Mammary epithelial cell (primary cell): ENCODE measurements at regions of chr1 and their contacts with region 1.

Region 1: GRCh38 chr1:229341774-229342655 is 832 bp downstream of the CCSAP start:
- DNase-seq: peak; percentile 78
- H3K4me3 ChIP-seq: peak overlapping the region; percentile 66 to 83 (median 69)
- H3K27ac ChIP-seq: peak overlapping the region; percentile 48
- H3K4me1 ChIP-seq: peaks cover 13% of the 10 kb centered on the region
- H3K27me3 ChIP-seq: no peaks in the 10 kb centered on the region
- CTCF ChIP-seq: no peak

Region 2: DNA sequence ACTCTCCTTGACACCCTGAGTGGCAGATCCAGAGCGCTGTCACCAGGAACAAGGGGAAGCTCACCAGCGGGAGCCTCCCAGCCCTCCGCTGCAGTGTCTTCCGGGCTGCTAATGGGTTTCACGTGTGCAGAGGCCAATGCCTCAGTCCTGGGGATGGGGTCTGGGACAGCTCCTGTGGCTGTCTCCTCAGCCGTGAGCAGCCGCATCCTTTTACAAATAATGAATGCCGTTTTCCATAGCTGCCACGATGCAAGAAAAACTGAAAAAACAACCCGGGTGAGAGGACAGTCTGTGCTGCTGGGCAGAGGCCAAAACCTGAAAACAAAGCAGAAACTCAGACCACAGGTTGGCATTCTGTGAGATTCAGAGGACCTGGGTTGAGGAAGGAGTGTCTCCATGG is 283.3 kb before region 1 on chr1:
- CTCF ChIA-PET with region 1: no interaction called
- dilution Hi-C with region 1: no loop called
- in situ Hi-C with region 1: no loop called
- intact Hi-C with region 1: no loop called
- DNase-seq: no peak
- H3K4me3 ChIP-seq: no peak overlapping the region
- H3K27ac ChIP-seq: no peak overlapping the region
- H3K4me1 ChIP-seq: peaks cover 3% of the 10 kb centered on the region
- H3K27me3 ChIP-seq: peaks cover 4% of the 10 kb centered on the region
- CTCF ChIP-seq: no peak

Region 3: GRCh38 chr1:229270547-229271447 is 71.2 kb before region 1 on chr1 and contains the start of gene RAB4A:
- CTCF ChIA-PET with region 1: no interaction called
- dilution Hi-C with region 1: no loop called
- in situ Hi-C with region 1: no loop called
- intact Hi-C with region 1: loop called (anchors 5 kb)
- DNase-seq: peak; percentile 81
- H3K4me3 ChIP-seq: peak within 1 kb of the TSS; percentile 63 to 78 (median 77)
- H3K27ac ChIP-seq: peak within 1 kb of the TSS; percentile 76
- H3K4me1 ChIP-seq: peaks cover 40% of the 10 kb centered on the region
- H3K27me3 ChIP-seq: no peaks in the 10 kb centered on the region
- CTCF ChIP-seq: no peak
- total RNA-seq, gene RAB4A: 46.5 to 59.2 TPM

Region 4: GRCh38 chr1:229360417-229360816 is 18.4 kb after region 1 on chr1:
- CTCF ChIA-PET with region 1: no interaction called
- dilution Hi-C with region 1: no loop called
- in situ Hi-C with region 1: no loop called
- intact Hi-C with region 1: no loop called
- DNase-seq: no peak
- H3K4me3 ChIP-seq: no peak overlapping the region
- H3K27ac ChIP-seq: no peak overlapping the region
- H3K4me1 ChIP-seq: no peaks in the 10 kb centered on the region
- H3K27me3 ChIP-seq: no peaks in the 10 kb centered on the region
- CTCF ChIP-seq: no peak

Region 5: GRCh38 chr1:229370601-229371021 is 28.6 kb after region 1 on chr1:
- CTCF ChIA-PET with region 1: no interaction called
- dilution Hi-C with region 1: no loop called
- in situ Hi-C with region 1: no loop called
- intact Hi-C with region 1: loop called (anchors 1 kb)
- DNase-seq: no peak
- H3K4me3 ChIP-seq: no peak overlapping the region
- H3K27ac ChIP-seq: no peak overlapping the region
- H3K4me1 ChIP-seq: peaks cover 21% of the 10 kb centered on the region
- H3K27me3 ChIP-seq: no peaks in the 10 kb centered on the region
- CTCF ChIP-seq: no peak

Region 6: DNA sequence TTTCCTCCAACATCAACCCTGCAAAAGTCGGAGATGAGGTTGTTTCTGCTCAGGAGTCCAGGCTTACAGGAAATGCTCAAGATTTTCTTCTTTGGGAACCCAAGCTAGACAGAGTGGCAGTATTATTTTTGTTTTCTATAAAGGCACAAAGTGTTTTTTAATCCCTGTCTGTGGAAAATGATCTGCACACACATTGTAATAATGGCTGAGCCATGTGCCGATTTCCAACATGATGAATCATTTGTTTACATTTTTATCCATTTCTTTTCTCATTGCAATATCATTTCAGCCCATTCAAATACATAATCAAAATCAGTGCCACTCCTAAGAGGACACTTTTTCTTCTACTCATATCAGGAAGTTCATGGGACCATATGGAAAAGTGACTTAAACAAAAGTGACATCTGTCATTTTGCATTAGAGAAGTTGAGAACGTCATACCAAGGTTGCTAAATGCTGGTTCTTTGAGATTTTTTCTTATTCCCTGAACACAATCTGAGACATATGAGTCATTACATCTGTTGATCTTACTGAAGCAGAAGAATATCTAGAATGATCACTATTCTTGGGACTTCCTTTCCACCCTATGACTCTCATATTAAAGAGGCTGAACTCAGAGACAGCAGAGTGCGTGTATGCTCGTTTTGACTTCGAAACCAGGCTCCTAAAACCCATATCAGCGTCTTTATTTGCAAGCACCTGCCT is 47.0 kb after region 1 on chr1:
- CTCF ChIA-PET with region 1: no interaction called
- dilution Hi-C with region 1: no loop called
- in situ Hi-C with region 1: no loop called
- intact Hi-C with region 1: no loop called
- DNase-seq: peak; percentile 18
- H3K4me3 ChIP-seq: no peak overlapping the region
- H3K27ac ChIP-seq: no peak overlapping the region
- H3K4me1 ChIP-seq: no peaks in the 10 kb centered on the region
- H3K27me3 ChIP-seq: peaks cover 2% of the 10 kb centered on the region
- CTCF ChIP-seq: no peak

Region 7: GRCh38 chr1:229410692-229411443 is 68.9 kb after region 1 on chr1:
- CTCF ChIA-PET with region 1: no interaction called
- dilution Hi-C with region 1: no loop called
- in situ Hi-C with region 1: no loop called
- intact Hi-C with region 1: loop called (anchors 5 kb)
- DNase-seq: peak; percentile 43
- H3K4me3 ChIP-seq: no peak overlapping the region
- H3K27ac ChIP-seq: no peak overlapping the region
- H3K4me1 ChIP-seq: peaks cover 14% of the 10 kb centered on the region
- H3K27me3 ChIP-seq: peaks cover 7% of the 10 kb centered on the region
- CTCF ChIP-seq: no peak

Region 8: GRCh38 chr1:229440851-229441537 is 99.0 kb after region 1 on chr1:
- CTCF ChIA-PET with region 1: no interaction called
- dilution Hi-C with region 1: loop called (anchors 10 kb)
- in situ Hi-C with region 1: no loop called
- intact Hi-C with region 1: loop called (anchors 5 kb)
- DNase-seq: peak; percentile 78
- H3K4me3 ChIP-seq: no peak overlapping the region
- H3K27ac ChIP-seq: no peak overlapping the region
- H3K4me1 ChIP-seq: no peaks in the 10 kb centered on the region
- H3K27me3 ChIP-seq: no peaks in the 10 kb centered on the region
- CTCF ChIP-seq: no peak

Region 9: GRCh38 chr1:230120926-230121381 is 778.9 kb after region 1 on chr1:
- CTCF ChIA-PET with region 1: interaction called, 12 read pairs
- dilution Hi-C with region 1: no loop called
- in situ Hi-C with region 1: no loop called
- intact Hi-C with region 1: no loop called
- DNase-seq: no peak
- H3K4me3 ChIP-seq: no peak overlapping the region
- H3K27ac ChIP-seq: no peak overlapping the region
- H3K4me1 ChIP-seq: peaks cover 52% of the 10 kb centered on the region
- H3K27me3 ChIP-seq: no peaks in the 10 kb centered on the region
- CTCF ChIP-seq: peak; percentile 50 to 61